Gastrocnemius medialis (tissue), 4 donors: ENCODE measurements at regions of chr3 and their contacts with region 1.

Region 1: DNA sequence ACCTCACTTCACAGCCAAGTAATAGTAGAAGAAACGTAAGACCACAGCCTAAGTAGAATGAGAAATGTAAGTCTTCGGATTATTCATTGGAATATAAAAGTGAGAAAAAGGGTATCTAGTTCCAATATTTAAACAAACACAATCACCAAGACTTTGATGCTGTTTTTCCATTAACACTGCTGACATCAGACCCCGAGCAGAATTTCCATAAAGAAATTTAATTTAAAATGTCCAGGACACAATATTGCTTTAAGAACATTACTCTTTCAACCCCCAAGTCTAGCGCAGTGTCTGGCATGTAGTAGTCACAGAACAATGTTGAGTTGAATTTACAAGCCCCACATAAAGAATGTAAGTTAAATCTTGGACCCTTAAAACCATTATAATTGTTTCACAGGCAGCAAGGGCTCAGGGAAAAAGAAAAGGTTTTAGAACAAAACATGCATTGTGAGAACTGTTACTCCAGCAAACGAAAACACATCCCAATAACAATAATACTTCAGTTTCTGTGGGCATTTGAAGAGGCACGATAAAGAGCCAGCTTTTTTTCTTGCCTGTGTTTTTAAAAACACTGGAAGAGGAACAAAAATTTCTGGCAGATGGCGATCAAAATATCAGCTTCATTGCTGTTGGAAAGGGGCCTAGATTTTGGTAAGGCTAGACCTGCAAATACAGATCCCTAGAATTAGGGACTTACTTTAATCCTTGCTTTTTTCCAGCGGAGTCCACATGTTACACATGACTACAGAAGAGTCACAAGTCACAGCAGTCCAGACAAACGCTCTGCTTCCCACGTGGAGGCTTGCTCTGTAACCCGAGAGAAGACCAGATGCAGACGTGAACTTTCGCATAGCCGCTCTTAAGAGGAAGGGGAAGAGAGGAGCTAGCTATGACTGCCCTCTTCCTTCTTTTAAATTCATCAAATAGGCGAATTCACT is 77.9 kb upstream of the IGSF10 start:
- DNase-seq: peak; percentile 26 to 42
- ATAC-seq: peak; percentile 87 to 98
- H3K4me3 ChIP-seq: peak overlapping the region; percentile 24 to 42 (median 34)
- H3K27ac ChIP-seq: peak overlapping the region; percentile 1 to 69 (median 60)
- H3K4me1 ChIP-seq: peaks cover 5 to 8% of the 10 kb centered on the region in 2 donors
- H3K27me3 ChIP-seq: no peaks in the 10 kb centered on the region
- CTCF ChIP-seq: no peak
- POLR2A ChIP-seq: no peak

Region 2: GRCh38 chr3:151630938-151631441 is 92.3 kb after region 1 on chr3:
- in situ Hi-C with region 1: no loop called
- intact Hi-C with region 1: loop called (anchors 5 kb)
- DNase-seq: peak in 1 of 2 donors; percentile 16
- ATAC-seq: peak; percentile 98 to 99
- H3K4me3 ChIP-seq: no peak overlapping the region
- H3K27ac ChIP-seq: peak overlapping the region; percentile 14 to 78 (median 71)
- H3K4me1 ChIP-seq: peaks cover 10 to 19% of the 10 kb centered on the region in 2 donors
- H3K27me3 ChIP-seq: no peaks in the 10 kb centered on the region
- CTCF ChIP-seq: no peak
- POLR2A ChIP-seq: no peak